ENCODE measurements at regions of chr22 and their contacts with region 1.

Region 1: DNA sequence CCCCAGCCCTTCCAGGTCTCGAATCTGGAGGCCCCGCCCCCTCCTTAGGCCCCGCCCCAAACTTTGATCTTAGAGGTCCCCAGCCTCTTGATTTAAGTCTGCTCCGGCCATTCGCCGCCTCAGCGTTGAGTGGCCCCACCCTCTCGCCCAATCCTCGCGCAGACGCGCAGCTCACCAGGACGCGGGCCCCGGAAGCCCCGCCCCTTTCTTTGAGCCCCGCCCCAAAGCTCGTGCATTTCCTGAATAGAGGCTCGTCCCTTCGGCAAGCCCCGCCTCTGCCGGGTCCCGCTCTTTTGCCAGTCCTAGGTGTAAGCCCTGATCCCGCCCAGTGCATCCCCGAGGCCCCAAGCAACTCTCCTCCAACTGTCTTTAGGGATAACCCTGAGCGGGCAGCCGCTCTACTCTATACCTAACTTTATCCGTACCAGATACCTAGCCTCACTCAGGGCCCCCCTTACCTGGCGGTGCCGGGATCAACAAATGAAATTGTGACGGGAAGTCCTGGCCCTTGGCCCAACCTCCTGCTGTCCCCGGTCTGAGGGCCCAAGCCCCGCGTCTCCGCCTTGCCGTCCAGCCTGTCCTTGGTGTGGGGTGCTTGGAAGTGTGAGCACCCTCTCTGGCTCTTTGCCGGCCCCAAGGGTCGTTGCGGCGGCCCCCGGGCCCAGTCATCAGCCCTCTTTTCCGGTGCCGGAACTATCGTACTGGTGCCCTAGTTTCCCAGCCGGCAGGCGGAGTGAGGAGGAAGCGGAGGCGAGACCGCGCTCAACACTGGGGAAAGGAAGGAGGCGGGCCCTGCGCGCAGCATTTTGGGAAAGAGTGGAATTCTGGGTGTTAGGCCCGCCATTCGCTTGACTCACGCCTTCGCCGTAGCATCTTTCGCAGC is at the start of gene SNRPD3:
- DNase-seq: peak; percentile 100
- H3K4me3 ChIP-seq: peak within 1 kb of the TSS; percentile 91 to 99 (median 94)
- H3K27ac ChIP-seq: peak within 1 kb of the TSS; percentile 99
- H3K4me1 ChIP-seq: peaks cover 0 to 51% (median 46%) of the 10 kb centered on the region in 4 donors
- H3K27me3 ChIP-seq: no peaks in the 10 kb centered on the region
- CTCF ChIP-seq: peak in 3 of 4 experiments; percentile 35 to 47 (median 42)
- EP300 ChIP-seq: peak in 1 of 4 donors; percentile 66
- POLR2A ChIP-seq: peak; percentile 32 to 36
- total RNA-seq, gene SNRPD3: 104 to 156 (median 133) TPM

Region 2: GRCh38 chr22:24592851-24593558 is 37.6 kb after region 1 on chr22 and contains the start of gene LRRC75B:
- intact Hi-C with region 1: loop called (anchors 2 kb)
- DNase-seq: peak; percentile 97
- H3K4me3 ChIP-seq: peak within 1 kb of the TSS; percentile 64 to 71 (median 65)
- H3K27ac ChIP-seq: peak within 1 kb of the TSS; percentile 79 to 88 (median 84)
- H3K4me1 ChIP-seq: peaks cover 0 to 21% (median 12%) of the 10 kb centered on the region in 4 donors
- H3K27me3 ChIP-seq: no peaks in the 10 kb centered on the region
- CTCF ChIP-seq: no peak
- EP300 ChIP-seq: no peak
- POLR2A ChIP-seq: peak in 1 of 2 donors; percentile 21
- total RNA-seq, gene LRRC75B: 11.1 to 18.6 (median 13.8) TPM

Measured in sigmoid colon (tissue), 7 donors.